ENCODE measurements at regions of chr9 and their contacts with region 1.

Region 1: DNA sequence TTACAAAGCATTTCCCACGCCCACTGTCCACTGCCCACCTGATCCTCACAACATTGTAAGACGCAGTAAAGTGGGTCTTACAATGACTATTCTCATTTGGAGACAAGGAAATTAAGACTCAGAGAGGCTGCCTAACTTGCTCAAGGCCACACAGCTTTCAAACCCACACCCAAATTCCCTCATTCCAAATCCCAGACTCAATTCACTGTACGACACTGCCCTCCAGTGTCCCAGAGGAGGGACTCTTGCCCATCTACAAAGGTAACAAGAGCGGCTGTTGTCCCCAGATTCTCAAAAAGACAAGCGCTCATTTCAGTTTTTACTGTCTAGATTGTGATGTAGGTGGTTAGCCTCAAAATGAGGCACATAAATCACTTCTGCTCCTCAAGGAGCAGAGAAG is 184.6 kb downstream of the ACTL7B start:
- DNase-seq: peak; percentile 58
- H3K4me3 ChIP-seq: no peak overlapping the region
- H3K27ac ChIP-seq: peak overlapping the region; percentile 73
- H3K4me1 ChIP-seq: peaks cover 35% of the 10 kb centered on the region
- H3K27me3 ChIP-seq: no peaks in the 10 kb centered on the region
- CTCF ChIP-seq: peak; percentile 68 to 78

Region 2: DNA sequence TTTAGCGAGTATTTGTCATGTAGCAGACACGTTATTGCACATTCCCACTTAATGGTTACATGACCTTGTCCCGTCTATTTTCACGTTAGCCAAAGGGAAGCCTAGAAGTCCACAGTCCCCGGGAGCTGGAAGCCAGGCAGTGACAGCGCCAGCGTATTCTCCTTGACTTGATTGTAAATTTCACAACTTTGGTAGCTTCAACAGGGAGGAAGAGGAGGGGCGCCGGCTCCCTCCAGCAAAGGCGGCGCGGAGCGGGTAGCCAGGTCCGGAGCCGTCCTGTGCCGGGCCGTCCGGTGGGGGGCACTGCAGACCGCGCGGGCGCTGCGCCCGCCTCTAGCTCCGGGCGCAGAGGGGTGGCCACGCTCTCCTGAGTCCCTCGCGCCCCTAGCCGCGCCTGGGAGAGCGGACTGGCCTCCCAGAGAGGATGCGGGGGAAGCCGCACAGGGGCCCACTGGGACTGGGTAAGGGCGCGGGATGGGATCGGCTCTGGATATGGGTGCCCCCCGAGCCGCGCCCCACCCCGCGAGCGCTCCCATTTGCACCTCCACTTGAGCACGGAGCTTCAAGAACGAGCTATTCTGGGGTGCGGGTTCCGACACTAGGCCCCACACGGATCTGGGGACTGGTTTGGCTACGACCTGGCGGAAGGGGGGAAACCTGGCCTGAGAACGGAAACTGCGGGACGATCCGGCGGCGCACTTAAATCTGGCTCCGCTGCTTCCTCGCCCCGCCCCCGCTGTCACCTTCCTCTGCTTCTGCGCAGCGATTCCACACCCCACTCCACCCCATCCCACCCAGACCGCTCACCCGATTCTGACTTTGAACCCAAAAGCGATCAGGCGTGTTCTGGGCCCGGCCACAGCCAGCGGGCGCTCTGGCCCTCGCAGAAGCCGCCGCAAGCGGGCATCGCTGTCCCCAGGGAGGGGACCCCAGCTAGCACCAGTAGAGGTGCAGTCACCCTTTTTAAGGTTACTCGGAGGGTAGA is 1205.4 kb before region 1 on chr9:
- CTCF ChIA-PET with region 1: no interaction called
- dilution Hi-C with region 1: no loop called
- in situ Hi-C with region 1: loop called in 1 of 2 experiments (anchors 25 kb)
- intact Hi-C with region 1: loop called (anchors 1 kb)
- DNase-seq: peak; percentile 50
- H3K4me3 ChIP-seq: peak overlapping the region; percentile 51 to 71 (median 59)
- H3K27ac ChIP-seq: no peak overlapping the region
- H3K4me1 ChIP-seq: peaks cover 11% of the 10 kb centered on the region
- H3K27me3 ChIP-seq: no peaks in the 10 kb centered on the region
- CTCF ChIP-seq: peak; percentile 63 to 83

Region 3: DNA sequence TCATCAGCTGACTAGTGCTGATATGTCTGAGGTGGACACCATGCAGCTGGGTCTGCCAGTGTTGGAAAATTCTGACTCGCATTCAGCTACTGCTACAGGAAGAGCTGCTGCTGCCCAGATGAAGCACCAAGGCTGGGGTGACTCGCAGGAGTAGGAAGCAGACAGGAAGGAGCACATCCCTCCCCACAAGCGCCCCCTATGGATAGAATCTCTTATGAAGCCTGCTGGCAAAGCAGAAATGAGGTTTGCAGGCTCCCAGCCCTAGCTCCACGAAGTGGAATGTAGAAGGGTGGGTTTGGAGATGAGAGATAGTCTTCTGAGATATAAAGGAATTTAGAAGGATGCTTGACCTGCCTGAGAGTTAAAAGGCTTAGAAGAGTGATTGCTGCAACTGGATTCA is 258.4 kb before region 1 on chr9:
- CTCF ChIA-PET with region 1: interaction called, 18 read pairs
- dilution Hi-C with region 1: no loop called
- in situ Hi-C with region 1: loop called in 1 of 2 experiments (anchors 5 kb)
- intact Hi-C with region 1: loop called (anchors 1 kb)
- DNase-seq: peak; percentile 15
- H3K4me3 ChIP-seq: no peak overlapping the region
- H3K27ac ChIP-seq: no peak overlapping the region
- H3K4me1 ChIP-seq: no peaks in the 10 kb centered on the region
- H3K27me3 ChIP-seq: no peaks in the 10 kb centered on the region
- CTCF ChIP-seq: no peak

Region 4: GRCh38 chr9:108621991-108622855 is 49.0 kb before region 1 on chr9:
- CTCF ChIA-PET with region 1: no interaction called
- dilution Hi-C with region 1: no loop called
- in situ Hi-C with region 1: no loop called
- intact Hi-C with region 1: no loop called
- DNase-seq: peak; percentile 60
- H3K4me3 ChIP-seq: no peak overlapping the region
- H3K27ac ChIP-seq: no peak overlapping the region
- H3K4me1 ChIP-seq: peaks cover 16% of the 10 kb centered on the region
- H3K27me3 ChIP-seq: no peaks in the 10 kb centered on the region
- CTCF ChIP-seq: no peak

Region 5: GRCh38 chr9:108634204-108634603 is 37.0 kb before region 1 on chr9:
- CTCF ChIA-PET with region 1: no interaction called
- dilution Hi-C with region 1: no loop called
- in situ Hi-C with region 1: no loop called
- intact Hi-C with region 1: loop called (anchors 1 kb)
- DNase-seq: peak; percentile 74
- H3K4me3 ChIP-seq: peak overlapping the region in 1 of 3 experiments; percentile 12
- H3K27ac ChIP-seq: peak overlapping the region; percentile 98
- H3K4me1 ChIP-seq: peaks cover 20% of the 10 kb centered on the region
- H3K27me3 ChIP-seq: no peaks in the 10 kb centered on the region
- CTCF ChIP-seq: no peak